Activated CD4-positive, alpha-beta T cell treated with anti-CD3 and anti-CD28 coated beads for 36 hours (primary cell): ENCODE measurements at regions of chr16 and their contacts with region 1.

Region 1: GRCh38 chr16:28553776-28554633 is at the start of gene SGF29:
- DNase-seq: peak; percentile 97
- ATAC-seq: peak; percentile 85
- H3K4me3 Mint-ChIP-seq: peak within 1 kb of the TSS; percentile 87
- H3K27ac Mint-ChIP-seq: peak within 1 kb of the TSS; percentile 97
- H3K4me1 Mint-ChIP-seq: peaks cover 44% of the 10 kb centered on the region
- H3K27me3 Mint-ChIP-seq: no peaks in the 10 kb centered on the region
- total RNA-seq, gene SGF29: 23.6 to 35.5 TPM

Region 2: DNA sequence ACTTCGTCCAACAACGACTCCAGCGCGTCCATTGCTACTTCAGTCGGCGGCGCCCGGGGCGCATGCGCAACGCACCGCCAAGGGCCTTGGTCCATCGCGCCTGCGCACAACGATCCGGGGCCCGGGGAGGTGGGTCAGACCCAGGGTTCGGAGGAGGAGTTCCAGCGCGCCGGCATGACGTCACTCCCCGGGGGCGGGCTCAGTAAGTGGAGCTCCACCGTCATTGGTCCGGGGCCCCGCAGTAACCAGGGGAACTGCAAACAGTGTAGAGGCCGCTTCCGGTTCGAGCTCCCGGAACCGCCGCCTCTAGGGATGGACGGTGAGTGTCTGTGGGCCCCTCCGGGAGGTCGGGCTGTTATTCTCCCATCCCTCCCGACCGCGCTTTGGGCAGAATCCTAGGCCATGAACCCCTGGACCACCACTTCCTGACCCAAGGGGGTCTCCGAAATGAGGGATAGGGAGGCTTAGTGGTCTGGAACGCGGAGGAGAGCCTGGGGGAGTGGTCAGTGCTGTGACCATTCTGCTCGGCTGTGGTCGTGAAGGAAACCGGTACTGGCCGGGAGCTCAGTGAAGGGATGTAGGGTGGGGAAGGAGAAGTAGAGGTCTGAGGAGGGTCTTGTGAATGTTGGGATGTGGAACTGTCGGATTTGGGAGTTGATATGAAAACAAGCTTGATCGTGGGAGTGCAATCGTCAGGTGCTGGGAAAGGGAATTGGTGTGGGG is 1004.0 kb before region 1 on chr16 and contains the starts of genes GTF3C1 and KATNIP:
- CTCF ChIA-PET with region 1: no interaction called
- POLR2A ChIA-PET with region 1: no interaction called
- intact Hi-C with region 1: loop called in 1 of 2 experiments (anchors 10 kb)
- DNase-seq: peak; percentile 100
- ATAC-seq: peak; percentile 98
- H3K4me3 Mint-ChIP-seq: peak within 1 kb of the TSS; percentile 94
- H3K27ac Mint-ChIP-seq: peak within 1 kb of the TSS; percentile 81
- H3K4me1 Mint-ChIP-seq: peaks cover 35% of the 10 kb centered on the region
- H3K27me3 Mint-ChIP-seq: no peaks in the 10 kb centered on the region
- total RNA-seq, gene GTF3C1: 48.8 to 50.7 TPM
- total RNA-seq, gene KATNIP: 12.3 to 12.8 TPM

Region 3: DNA sequence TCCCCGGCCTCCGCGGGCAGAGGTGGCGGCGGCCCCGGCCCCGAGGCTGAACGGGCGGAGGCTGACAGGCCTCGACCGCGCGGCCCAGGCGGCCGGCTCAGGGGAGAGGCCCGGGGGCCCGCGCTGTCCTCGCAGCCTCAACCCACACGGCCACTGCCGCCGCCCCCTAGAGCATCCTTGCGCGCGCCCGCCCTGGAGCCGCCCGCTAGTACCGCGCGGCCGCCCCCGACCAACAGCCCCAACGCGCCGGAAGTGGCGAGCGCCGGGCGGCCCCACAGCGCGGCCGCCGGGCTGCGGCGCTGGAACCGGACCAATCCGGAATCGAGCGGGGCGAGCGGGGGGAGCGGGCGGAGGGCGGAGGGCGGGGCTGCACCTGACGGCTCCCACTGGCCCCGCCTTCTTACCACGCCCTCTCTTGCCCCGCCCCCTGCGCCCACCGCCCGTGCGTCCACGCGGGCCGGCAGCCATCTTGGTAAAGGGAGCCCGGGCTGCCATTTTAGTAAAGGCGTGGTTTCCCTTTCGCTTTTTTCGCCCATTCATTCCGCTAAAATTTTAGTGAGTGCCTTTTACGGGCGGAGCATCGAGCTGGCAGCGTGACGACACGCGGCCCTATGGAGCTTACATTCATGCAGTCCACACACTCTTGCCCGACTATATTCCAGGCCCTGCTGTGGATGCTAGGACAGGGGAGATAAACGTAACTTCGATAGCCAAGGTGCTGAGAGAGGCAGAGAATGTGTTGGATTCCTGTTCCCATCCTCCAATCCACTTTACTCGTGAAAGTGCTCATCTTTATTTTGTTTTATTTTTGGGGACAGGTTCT is 342.1 kb before region 1 on chr16 and contains the start of gene XPO6:
- CTCF ChIA-PET with region 1: no interaction called
- POLR2A ChIA-PET with region 1: no interaction called
- intact Hi-C with region 1: loop called in 1 of 2 experiments (anchors 1 kb)
- DNase-seq: peak; percentile 100
- ATAC-seq: peak; percentile 82
- H3K4me3 Mint-ChIP-seq: peak within 1 kb of the TSS; percentile 96
- H3K27ac Mint-ChIP-seq: peak within 1 kb of the TSS; percentile 99
- H3K4me1 Mint-ChIP-seq: peaks cover 32% of the 10 kb centered on the region
- H3K27me3 Mint-ChIP-seq: no peaks in the 10 kb centered on the region
- total RNA-seq, gene XPO6: 241 to 368 TPM

Region 4: DNA sequence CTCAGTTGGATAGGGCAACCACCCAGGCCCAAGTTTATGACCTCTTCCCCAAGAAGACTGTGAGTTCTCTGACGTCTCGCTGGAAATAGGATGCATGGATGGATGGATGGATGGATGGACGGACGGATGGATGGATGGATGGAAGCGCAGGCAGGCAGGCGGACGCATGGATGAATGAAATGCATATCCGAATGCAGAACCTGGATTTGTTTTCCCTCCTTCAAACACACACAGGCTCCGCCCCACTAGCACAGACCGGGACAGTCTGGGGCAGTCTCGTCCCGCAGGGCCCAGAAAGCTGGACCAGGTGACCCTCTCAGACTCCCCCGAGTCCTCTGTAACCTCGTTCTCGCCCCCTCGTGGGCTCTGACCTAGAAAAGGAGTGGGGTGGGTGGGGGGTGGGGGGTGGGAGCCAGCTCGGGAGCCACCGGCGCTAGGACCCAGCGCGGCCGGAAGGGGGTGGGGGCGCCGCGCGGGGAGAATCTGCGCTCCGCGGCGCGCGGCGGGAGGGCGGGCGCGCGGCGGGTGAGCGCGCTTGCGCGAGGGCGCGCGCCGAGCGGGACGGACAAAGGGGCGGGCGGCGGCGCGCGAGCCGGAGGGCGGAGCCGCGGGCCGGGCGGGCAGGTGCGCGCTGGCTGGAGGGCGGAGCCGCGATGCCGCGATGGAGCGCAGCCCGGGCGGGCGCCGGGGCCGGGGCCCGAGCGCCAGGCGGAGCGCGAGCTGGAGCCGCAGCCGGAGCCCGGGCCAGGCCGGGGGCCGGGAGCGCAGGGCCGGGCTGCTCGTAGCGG is 261.9 kb before region 1 on chr16 and contains the start of gene SBK1:
- CTCF ChIA-PET with region 1: no interaction called
- POLR2A ChIA-PET with region 1: no interaction called
- intact Hi-C with region 1: loop called in 1 of 2 experiments (anchors 1 kb)
- DNase-seq: peak; percentile 91
- ATAC-seq: peak; percentile 94
- H3K4me3 Mint-ChIP-seq: peak within 1 kb of the TSS; percentile 84
- H3K27ac Mint-ChIP-seq: peak within 1 kb of the TSS; percentile 93
- H3K4me1 Mint-ChIP-seq: peaks cover 51% of the 10 kb centered on the region
- H3K27me3 Mint-ChIP-seq: no peaks in the 10 kb centered on the region
- total RNA-seq, gene SBK1: 6.5 to 6.6 TPM

Region 5: DNA sequence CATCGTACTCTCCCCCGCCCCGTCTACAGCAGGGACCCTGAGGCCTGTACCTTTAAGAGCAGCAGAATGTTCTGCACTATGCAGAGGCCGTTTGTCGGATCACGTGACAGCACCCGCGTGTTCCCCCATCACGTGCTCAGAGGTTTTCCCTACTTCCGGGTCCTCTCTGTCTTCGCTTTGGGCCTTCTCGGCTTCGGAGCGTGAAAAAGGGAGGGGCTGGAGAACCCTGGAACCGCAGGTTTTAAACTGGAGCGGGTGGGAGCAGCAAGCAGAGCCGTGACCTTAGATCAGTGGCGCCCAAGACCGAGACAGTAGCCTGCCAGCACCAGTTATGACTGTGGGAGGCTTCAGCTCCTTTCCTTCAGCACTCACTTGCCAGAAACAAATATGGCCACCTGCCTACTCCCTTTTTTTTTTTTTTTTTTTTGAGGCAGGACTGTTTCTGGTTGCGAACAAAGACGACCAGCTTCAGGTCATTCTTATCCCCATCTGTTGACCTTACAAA is 62.0 kb before region 1 on chr16 and contains the start of gene CLN3:
- CTCF ChIA-PET with region 1: interaction called, 6 read pairs
- POLR2A ChIA-PET with region 1: interaction called, 4 read pairs
- intact Hi-C with region 1: loop called (anchors 1 to 2 kb)
- DNase-seq: peak; percentile 94
- ATAC-seq: peak; percentile 64
- H3K4me3 Mint-ChIP-seq: peak within 1 kb of the TSS; percentile 94
- H3K27ac Mint-ChIP-seq: peak within 1 kb of the TSS; percentile 100
- H3K4me1 Mint-ChIP-seq: peaks cover 60% of the 10 kb centered on the region
- H3K27me3 Mint-ChIP-seq: no peaks in the 10 kb centered on the region
- total RNA-seq, gene CLN3: 19.0 to 24.6 TPM

Region 6: DNA sequence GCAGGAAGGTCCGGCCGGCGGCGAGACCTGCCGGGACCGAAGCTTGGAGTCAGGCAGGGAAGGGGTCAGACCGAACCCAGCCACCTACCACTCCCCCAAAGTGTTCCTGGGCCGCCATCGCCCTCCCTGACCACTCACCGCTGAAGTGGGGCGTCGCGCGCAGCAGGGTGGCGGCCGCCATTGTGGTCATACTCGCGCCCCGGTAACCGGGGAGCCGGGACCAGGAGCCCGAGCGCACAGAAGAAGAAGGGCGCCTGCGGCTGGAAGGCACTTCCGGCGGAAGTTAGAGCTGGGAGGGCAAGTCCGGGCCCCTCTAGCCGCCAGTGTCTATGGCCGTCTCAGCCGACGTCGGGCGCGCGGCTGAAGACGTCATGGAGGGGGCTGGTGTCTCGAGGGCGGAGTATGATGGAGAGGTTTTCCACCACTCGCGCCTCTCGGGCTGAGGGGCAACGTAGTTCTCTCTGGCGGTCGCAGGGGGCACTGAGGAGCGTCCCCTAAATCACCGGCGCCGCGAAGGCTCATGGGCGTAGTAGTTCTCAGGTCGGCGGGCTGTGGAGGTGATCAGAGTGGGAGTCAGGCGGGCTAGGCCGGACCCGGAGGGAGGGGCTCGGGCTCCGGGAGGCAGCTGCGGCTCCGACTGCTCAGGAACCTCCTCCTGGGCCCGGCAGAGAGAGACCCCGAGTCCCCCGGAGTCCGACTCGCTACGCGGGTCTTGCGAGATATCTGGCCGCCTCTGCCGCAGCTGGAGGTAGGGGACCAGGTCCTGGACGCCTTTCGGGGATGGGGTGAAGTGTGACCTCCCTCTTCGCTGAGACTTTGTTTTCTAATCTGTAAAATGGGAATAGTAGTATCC is 292.3 kb after region 1 on chr16 and contains the start of gene TUFM:
- CTCF ChIA-PET with region 1: no interaction called
- POLR2A ChIA-PET with region 1: no interaction called
- intact Hi-C with region 1: loop called in 1 of 2 experiments (anchors 1 kb)
- DNase-seq: peak; percentile 99
- ATAC-seq: peak; percentile 94
- H3K4me3 Mint-ChIP-seq: peak within 1 kb of the TSS; percentile 97
- H3K27ac Mint-ChIP-seq: peak within 1 kb of the TSS; percentile 97
- H3K4me1 Mint-ChIP-seq: peaks cover 23% of the 10 kb centered on the region
- H3K27me3 Mint-ChIP-seq: no peaks in the 10 kb centered on the region
- total RNA-seq, gene TUFM: 224 to 241 TPM

Region 7: GRCh38 chr16:28924732-28925385 is 370.9 kb after region 1 on chr16 and contains the start of gene RABEP2:
- CTCF ChIA-PET with region 1: no interaction called
- POLR2A ChIA-PET with region 1: no interaction called
- intact Hi-C with region 1: loop called in 1 of 2 experiments (anchors 5 kb)
- DNase-seq: peak; percentile 99
- ATAC-seq: peak; percentile 93
- H3K4me3 Mint-ChIP-seq: peak within 1 kb of the TSS; percentile 87
- H3K27ac Mint-ChIP-seq: peak within 1 kb of the TSS; percentile 96
- H3K4me1 Mint-ChIP-seq: peaks cover 14% of the 10 kb centered on the region
- H3K27me3 Mint-ChIP-seq: no peaks in the 10 kb centered on the region
- total RNA-seq, gene RABEP2: 8.1 to 12.9 TPM